Astrocyte of the cerebellum (primary cell): ENCODE measurements at regions of chr12 and their contacts with region 1.

Region 1: GRCh38 chr12:80056845-80057244 is 42.5 kb upstream of the OTOGL start:
- DNase-seq: peak; percentile 47
- H3K4me3 ChIP-seq: no peak overlapping the region
- CTCF ChIP-seq: no peak

Region 2: DNA sequence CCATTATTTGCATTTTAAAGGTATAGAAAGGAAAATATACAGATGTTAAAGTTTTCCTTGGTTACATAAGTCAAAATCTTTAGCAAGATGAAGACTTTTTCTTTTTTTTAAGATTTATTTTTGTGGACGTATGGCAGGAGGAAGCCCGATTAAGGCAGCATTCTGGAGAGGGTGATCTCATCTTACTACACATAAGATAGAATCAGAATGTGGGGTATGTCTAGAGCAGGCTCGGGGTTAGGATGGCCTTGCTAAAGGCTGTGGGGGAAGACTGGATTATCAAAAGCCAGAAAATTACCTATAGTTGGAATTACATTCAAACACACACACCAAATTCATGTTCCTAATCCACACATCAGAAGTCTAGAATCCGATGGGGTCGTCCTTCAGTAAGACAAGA is 37.2 kb before region 1 on chr12:
- in situ Hi-C with region 1: loop called (anchors 5 kb)
- DNase-seq: no peak
- H3K4me3 ChIP-seq: no peak overlapping the region
- CTCF ChIP-seq: no peak

Region 3: GRCh38 chr12:80087486-80088213 is 30.8 kb after region 1 on chr12:
- in situ Hi-C with region 1: no loop called
- DNase-seq: no peak
- H3K4me3 ChIP-seq: no peak overlapping the region
- CTCF ChIP-seq: no peak